ENCODE measurements at regions of chr10 and their contacts with region 1.

Region 1: DNA sequence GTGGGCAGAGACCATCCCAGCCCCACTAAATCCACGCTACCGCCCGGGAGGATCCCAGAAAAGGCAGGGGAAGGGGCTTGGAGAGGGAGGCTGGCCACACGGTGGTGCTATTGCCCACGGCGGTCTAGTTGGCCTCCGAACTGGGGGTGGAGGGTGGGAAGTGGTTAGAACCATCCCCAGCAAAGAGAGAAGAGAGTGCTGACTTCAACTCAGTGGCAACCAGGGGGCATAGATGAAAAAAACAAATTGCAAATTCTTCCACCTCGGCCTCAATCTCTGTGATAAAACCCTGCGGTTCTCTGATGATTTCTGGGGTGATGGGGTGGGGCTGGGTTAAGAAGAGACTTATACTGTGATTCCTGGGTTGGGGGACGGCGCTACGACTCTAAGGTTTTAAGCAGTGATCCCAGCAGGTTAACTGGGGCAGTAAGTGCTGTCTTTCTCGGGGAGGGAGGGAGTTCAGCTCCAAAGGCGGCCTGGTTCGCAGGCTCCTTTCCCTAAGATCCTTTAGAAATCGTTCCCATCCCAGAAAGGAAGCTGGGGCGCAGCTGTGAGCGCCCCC is 154.5 kb upstream of the LYZL2 start:
- DNase-seq: peak; percentile 95
- H3K4me3 ChIP-seq: peak overlapping the region; percentile 33 to 79 (median 68)
- H3K27ac ChIP-seq: peak overlapping the region; percentile 60 to 95 (median 92)
- H3K4me1 ChIP-seq: peaks cover 3 to 35% (median 29%) of the 10 kb centered on the region in 6 donors
- H3K27me3 ChIP-seq: peaks cover 0 to 10% (median 0%) of the 10 kb centered on the region in 7 donors
- CTCF ChIP-seq: peak; percentile 73 to 93 (median 89)
- POLR2A ChIP-seq: no peak

Region 2: GRCh38 chr10:29881336-29881771 is 902.7 kb before region 1 on chr10:
- intact Hi-C with region 1: no loop called
- DNase-seq: no peak
- H3K4me3 ChIP-seq: no peak overlapping the region
- H3K27ac ChIP-seq: no peak overlapping the region
- H3K4me1 ChIP-seq: no peaks in the 10 kb centered on the region
- H3K27me3 ChIP-seq: peaks cover 0 to 18% (median 0%) of the 10 kb centered on the region in 7 donors
- CTCF ChIP-seq: no peak
- POLR2A ChIP-seq: no peak

Region 3: GRCh38 chr10:31318854-31319601 is 535.0 kb after region 1 on chr10 and contains the start of gene ZEB1:
- intact Hi-C with region 1: loop called (anchors 10 kb)
- DNase-seq: peak; percentile 96
- H3K4me3 ChIP-seq: peak within 1 kb of the TSS; percentile 59 to 95 (median 88)
- H3K27ac ChIP-seq: peak within 1 kb of the TSS; percentile 93 to 99 (median 98)
- H3K4me1 ChIP-seq: peaks cover 8 to 54% (median 37%) of the 10 kb centered on the region in 6 donors
- H3K27me3 ChIP-seq: peaks cover 0 to 22% (median 0%) of the 10 kb centered on the region in 7 donors
- CTCF ChIP-seq: peak in 9 of 11 experiments; percentile 38 to 74 (median 59)
- POLR2A ChIP-seq: no peak
- total RNA-seq, gene ZEB1: 41.6 to 51.8 (median 46.0) TPM

Region 4: DNA sequence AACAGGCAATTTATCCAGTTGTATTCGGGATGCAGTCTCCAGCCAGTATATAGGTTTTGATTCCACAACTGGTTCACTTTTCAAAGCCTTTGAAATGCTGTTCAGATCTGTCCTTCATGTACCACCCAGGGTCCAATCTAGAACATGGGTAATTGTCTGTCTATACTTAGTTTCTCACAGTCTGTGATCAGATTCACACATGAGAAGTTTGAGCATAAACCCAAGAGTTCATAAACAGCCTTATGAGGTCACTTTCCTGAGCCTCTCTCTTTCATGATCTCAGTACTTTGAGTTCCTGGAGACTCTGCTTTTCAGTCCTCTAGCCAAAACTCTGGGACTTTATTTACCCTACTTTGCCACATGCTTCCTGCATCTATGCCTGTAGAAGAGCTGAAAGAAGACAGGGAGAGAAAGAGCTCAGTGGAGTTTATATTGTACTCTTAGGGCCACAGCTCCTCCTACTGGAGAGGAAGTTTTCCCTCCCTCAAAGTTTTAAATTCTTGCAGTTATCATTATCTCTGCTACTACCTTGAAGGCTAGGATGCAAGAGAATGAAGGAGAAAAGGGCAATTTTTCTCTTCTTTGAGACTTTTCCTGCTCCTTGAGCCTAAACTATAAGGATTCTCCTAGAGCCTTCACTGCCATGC is 707.0 kb after region 1 on chr10:
- intact Hi-C with region 1: loop called (anchors 10 kb)
- DNase-seq: no peak
- H3K4me3 ChIP-seq: no peak overlapping the region
- H3K27ac ChIP-seq: no peak overlapping the region
- H3K4me1 ChIP-seq: no peaks in the 10 kb centered on the region
- H3K27me3 ChIP-seq: no peaks in the 10 kb centered on the region
- CTCF ChIP-seq: peak in 9 of 11 experiments; percentile 27 to 58 (median 48)
- POLR2A ChIP-seq: no peak

Region 5: GRCh38 chr10:31808258-31809218 is 1024.5 kb after region 1 on chr10:
- intact Hi-C with region 1: loop called (anchors 10 kb)
- DNase-seq: no peak
- H3K4me3 ChIP-seq: peak overlapping the region in 2 of 8 donors; percentile 14 to 43
- H3K27ac ChIP-seq: peak overlapping the region in 7 of 8 donors; percentile 62 to 71 (median 65)
- H3K4me1 ChIP-seq: peaks cover 0 to 17% (median 8%) of the 10 kb centered on the region in 6 donors
- H3K27me3 ChIP-seq: no peaks in the 10 kb centered on the region
- CTCF ChIP-seq: peak in 10 of 11 experiments; percentile 34 to 65 (median 58)
- POLR2A ChIP-seq: no peak